ENCODE measurements at regions of chr18 and their contacts with region 1.

Region 1: GRCh38 chr18:59899298-59900221 is at the start of gene PMAIP1:
- DNase-seq: no peak
- ATAC-seq: peak; percentile 73
- H3K4me3 ChIP-seq: peak within 1 kb of the TSS; percentile 84
- H3K27ac ChIP-seq: peak within 1 kb of the TSS; percentile 95
- H3K4me1 ChIP-seq: no peaks in the 10 kb centered on the region; the same call in 1 of the 2 replicates
- H3K27me3 ChIP-seq: no peaks in the 10 kb centered on the region
- CTCF ChIP-seq: no peak
- EP300 ChIP-seq: 0 out of 4 replicates have a peak, but pooled peaks of 1 of the 2 experiments have one; percentile 2
- POLR2A ChIP-seq: peak; percentile 100
- RAD21 ChIP-seq: peak; percentile 6; the same call in 1 of the 2 replicates
- polyA plus RNA-seq, gene PMAIP1: 74.0 to 119 TPM

Region 2: DNA sequence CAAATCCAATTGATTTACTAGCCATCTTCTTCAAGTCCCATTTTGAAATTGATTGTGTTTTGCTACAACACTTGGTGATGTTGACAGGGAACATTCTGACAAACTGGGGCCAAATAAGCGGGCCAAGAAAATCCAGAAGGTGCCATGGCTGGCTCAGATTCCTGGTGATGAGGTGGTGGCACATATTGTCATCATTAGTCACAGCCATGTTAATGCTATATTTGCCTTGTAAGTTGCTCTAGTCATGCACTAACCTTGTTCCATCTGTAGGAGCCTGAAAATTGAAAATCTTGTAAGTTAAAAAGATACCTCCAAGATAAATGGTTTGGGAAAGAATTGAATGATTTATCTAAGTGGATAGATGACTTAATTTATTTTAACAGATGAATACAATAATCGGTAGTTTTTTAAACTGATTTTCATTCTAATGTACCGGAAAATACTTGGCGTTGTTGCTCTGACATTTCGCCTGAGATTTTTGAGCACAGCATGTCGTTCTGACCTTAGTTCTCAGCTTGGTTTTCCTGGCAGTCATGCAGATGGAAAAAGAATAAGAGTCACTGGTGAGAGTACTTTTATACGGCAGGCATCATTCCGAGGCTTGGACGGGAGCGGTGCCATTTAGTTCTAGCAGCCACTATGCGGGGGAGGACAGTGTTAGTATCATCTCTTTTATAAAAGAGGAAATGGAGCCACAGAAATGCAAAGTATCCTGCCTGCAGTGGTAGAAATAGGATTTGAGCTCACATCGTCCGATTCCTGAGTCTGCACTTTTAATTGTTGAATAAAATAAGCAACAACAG is 901.0 kb before region 1 on chr18:
- CTCF ChIA-PET with region 1: no interaction called
- POLR2A ChIA-PET with region 1: no interaction called
- RAD21 ChIA-PET with region 1: no interaction called
- SMC1A ChIA-PET with region 1: no interaction called
- in situ Hi-C with region 1: loop called (anchors 25 kb)
- intact Hi-C with region 1: no loop called
- DNase-seq: no peak
- ATAC-seq: peak; percentile 84
- H3K4me3 ChIP-seq: peak overlapping the region; percentile 8; the same call in 1 of the 2 replicates
- H3K27ac ChIP-seq: no peak overlapping the region
- H3K4me1 ChIP-seq: 0 out of 2 replicates have a peak, but pooled peaks cover 2% of the 10 kb centered on the region
- H3K27me3 ChIP-seq: no peaks in the 10 kb centered on the region
- CTCF ChIP-seq: no peak
- EP300 ChIP-seq: no peak
- POLR2A ChIP-seq: no peak
- RAD21 ChIP-seq: no peak

Region 3: GRCh38 chr18:59876310-59876626 is 23.3 kb before region 1 on chr18:
- CTCF ChIA-PET with region 1: interaction called, 5 read pairs
- POLR2A ChIA-PET with region 1: interaction called, 68 read pairs
- RAD21 ChIA-PET with region 1: interaction called, 45 read pairs
- SMC1A ChIA-PET with region 1: interaction called, 51 read pairs
- in situ Hi-C with region 1: no loop called
- intact Hi-C with region 1: no loop called
- DNase-seq: peak; percentile 86
- ATAC-seq: peak; percentile 79
- H3K4me3 ChIP-seq: peak overlapping the region; percentile 56; the same call in 1 of the 2 replicates
- H3K27ac ChIP-seq: peak overlapping the region; percentile 87
- H3K4me1 ChIP-seq: peaks cover 59% of the 10 kb centered on the region
- H3K27me3 ChIP-seq: no peaks in the 10 kb centered on the region
- CTCF ChIP-seq: no peak
- EP300 ChIP-seq: peak in 1 of 2 experiments; percentile 77; a peak in 3 of 4 replicates
- POLR2A ChIP-seq: no peak
- RAD21 ChIP-seq: no peak

Region 4: GRCh38 chr18:59927246-59927825 is 27.8 kb after region 1 on chr18:
- CTCF ChIA-PET with region 1: interaction called, 19 read pairs
- POLR2A ChIA-PET with region 1: interaction called, 67 read pairs
- RAD21 ChIA-PET with region 1: interaction called, 187 read pairs
- SMC1A ChIA-PET with region 1: interaction called, 289 read pairs
- in situ Hi-C with region 1: no loop called
- intact Hi-C with region 1: loop called (anchors 2 kb)
- DNase-seq: peak; percentile 98
- ATAC-seq: peak; percentile 82
- H3K4me3 ChIP-seq: no peak overlapping the region
- H3K27ac ChIP-seq: peak overlapping the region; percentile 93
- H3K4me1 ChIP-seq: peaks cover 49% of the 10 kb centered on the region
- H3K27me3 ChIP-seq: no peaks in the 10 kb centered on the region
- CTCF ChIP-seq: no peak
- EP300 ChIP-seq: peak; percentile 63 to 67; a peak in 3 of 4 replicates
- POLR2A ChIP-seq: no peak
- RAD21 ChIP-seq: no peak

Region 5: DNA sequence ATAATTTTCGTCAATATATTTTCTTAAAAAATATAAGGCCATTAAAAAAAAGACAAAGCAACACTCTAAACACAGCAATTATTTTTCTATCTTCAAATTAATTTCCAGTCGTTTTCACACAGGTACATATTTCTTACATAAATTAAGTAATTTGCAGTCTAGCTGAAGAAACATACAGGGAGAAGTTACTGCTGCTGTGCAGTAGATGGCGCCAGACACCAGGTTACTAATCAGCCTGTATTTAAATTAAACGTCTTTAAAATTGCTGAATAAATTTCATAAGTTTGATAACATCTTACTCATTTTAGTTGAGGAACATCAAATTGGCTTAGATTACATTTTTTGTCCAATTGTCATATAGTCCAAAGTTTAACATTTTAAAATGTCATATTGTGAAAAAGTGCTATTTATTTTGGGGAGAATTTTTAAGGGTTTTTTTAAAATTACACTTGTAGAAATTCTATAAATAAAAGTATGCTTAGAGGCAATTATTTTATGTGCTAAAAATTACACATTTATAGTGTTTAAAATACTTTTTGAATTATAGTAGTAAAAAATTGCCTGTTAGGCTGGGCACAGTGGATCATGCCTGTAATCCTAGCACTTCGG is 88.6 kb after region 1 on chr18:
- CTCF ChIA-PET with region 1: interaction called, 7 read pairs
- POLR2A ChIA-PET with region 1: interaction called, 3 read pairs
- RAD21 ChIA-PET with region 1: interaction called, 16 read pairs
- SMC1A ChIA-PET with region 1: interaction called, 33 read pairs
- in situ Hi-C with region 1: no loop called
- intact Hi-C with region 1: loop called (anchors 2 kb)
- DNase-seq: no peak
- ATAC-seq: peak; percentile 81
- H3K4me3 ChIP-seq: no peak overlapping the region
- H3K27ac ChIP-seq: no peak overlapping the region
- H3K4me1 ChIP-seq: no peaks in the 10 kb centered on the region
- H3K27me3 ChIP-seq: no peaks in the 10 kb centered on the region
- CTCF ChIP-seq: peak; percentile 83 to 90 (median 87)
- EP300 ChIP-seq: no peak
- POLR2A ChIP-seq: no peak
- RAD21 ChIP-seq: peak; percentile 96

Region 6: DNA sequence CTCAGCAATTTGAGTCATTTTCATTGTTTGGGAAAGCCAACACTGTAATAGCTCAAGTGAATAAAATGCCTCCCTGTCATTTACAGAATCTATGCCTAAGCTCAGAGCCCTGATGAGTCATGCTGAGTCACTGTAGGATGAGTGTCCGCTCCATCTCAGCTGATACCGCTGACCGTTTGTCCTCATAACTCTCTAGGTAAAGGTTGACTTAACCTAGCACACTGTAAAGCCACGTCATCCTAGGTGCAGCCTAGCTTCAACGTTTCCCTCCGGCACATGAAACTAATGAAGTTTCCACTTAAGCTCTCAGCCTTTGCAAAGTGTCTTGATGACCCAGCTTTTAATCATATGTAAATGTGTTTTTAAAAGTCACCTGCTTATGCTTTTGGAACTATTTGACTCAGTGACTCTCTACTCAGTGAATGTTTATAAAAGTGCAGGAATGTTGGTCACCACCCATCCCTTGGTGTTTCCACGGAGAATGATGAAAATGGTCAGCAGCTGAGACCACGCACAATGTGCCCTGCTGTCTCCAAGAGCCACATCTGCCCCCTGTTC is 154.3 kb after region 1 on chr18:
- CTCF ChIA-PET with region 1: no interaction called
- POLR2A ChIA-PET with region 1: no interaction called
- RAD21 ChIA-PET with region 1: no interaction called
- SMC1A ChIA-PET with region 1: no interaction called
- in situ Hi-C with region 1: no loop called
- intact Hi-C with region 1: no loop called
- DNase-seq: peak; percentile 8
- ATAC-seq: peak; percentile 67
- H3K4me3 ChIP-seq: no peak overlapping the region
- H3K27ac ChIP-seq: no peak overlapping the region
- H3K4me1 ChIP-seq: no peaks in the 10 kb centered on the region; the same call in 1 of the 2 replicates
- H3K27me3 ChIP-seq: no peaks in the 10 kb centered on the region
- CTCF ChIP-seq: no peak
- EP300 ChIP-seq: no peak
- POLR2A ChIP-seq: no peak
- RAD21 ChIP-seq: no peak

Region 7: GRCh38 chr18:60554967-60555366 is 655.4 kb after region 1 on chr18:
- CTCF ChIA-PET with region 1: no interaction called
- POLR2A ChIA-PET with region 1: no interaction called
- RAD21 ChIA-PET with region 1: no interaction called
- SMC1A ChIA-PET with region 1: no interaction called
- in situ Hi-C with region 1: no loop called
- intact Hi-C with region 1: no loop called
- DNase-seq: no peak
- ATAC-seq: no peak; the same call in 2 of the 3 replicates
- H3K4me3 ChIP-seq: no peak overlapping the region
- H3K27ac ChIP-seq: no peak overlapping the region
- H3K4me1 ChIP-seq: no peaks in the 10 kb centered on the region
- H3K27me3 ChIP-seq: no peaks in the 10 kb centered on the region
- CTCF ChIP-seq: no peak
- EP300 ChIP-seq: no peak
- POLR2A ChIP-seq: no peak
- RAD21 ChIP-seq: no peak